AG04450 (cell line): ENCODE measurements at regions of chr22 and their contacts with region 1.

Region 1: GRCh38 chr22:24803011-24803542 is 2.9 kb upstream of the SGSM1 start:
- DNase-seq: no peak
- H3K4me3 ChIP-seq: no peak overlapping the region
- H3K27ac ChIP-seq: no peak overlapping the region
- H3K27me3 ChIP-seq: peaks cover 8% of the 10 kb centered on the region
- CTCF ChIP-seq: peak; percentile 88

Region 2: DNA sequence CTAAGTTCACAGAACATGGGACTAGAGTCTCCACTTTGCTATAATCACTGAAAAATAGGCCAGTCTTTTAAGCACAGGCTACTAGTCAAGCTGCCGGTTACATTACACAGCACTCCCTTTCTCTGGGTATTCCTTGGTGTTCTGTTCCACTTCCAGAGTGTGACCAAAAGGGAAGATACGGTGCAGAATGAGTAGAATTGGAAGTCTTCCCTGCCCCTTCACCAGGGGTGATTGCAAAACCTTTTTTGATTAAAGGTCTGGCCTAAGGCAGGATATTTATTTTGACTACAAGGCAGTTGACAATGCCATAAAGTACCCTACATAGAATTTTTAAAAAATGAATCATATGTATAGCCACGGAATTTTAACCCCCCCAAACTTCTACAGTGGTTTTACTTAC is 435.2 kb before region 1 on chr22:
- CTCF ChIA-PET with region 1: no interaction called
- POLR2A ChIA-PET with region 1: no interaction called
- DNase-seq: no peak
- H3K4me3 ChIP-seq: no peak overlapping the region
- H3K27ac ChIP-seq: no peak overlapping the region
- H3K27me3 ChIP-seq: no peaks in the 10 kb centered on the region
- CTCF ChIP-seq: no peak

Region 3: GRCh38 chr22:24791362-24791761 is 11.7 kb before region 1 on chr22:
- CTCF ChIA-PET with region 1: interaction called, 11 read pairs
- POLR2A ChIA-PET with region 1: no interaction called
- DNase-seq: no peak
- H3K4me3 ChIP-seq: no peak overlapping the region
- H3K27ac ChIP-seq: no peak overlapping the region
- H3K27me3 ChIP-seq: no peaks in the 10 kb centered on the region
- CTCF ChIP-seq: no peak

Region 4: GRCh38 chr22:24816806-24817205 is 13.7 kb after region 1 on chr22:
- CTCF ChIA-PET with region 1: interaction called, 23 read pairs
- POLR2A ChIA-PET with region 1: no interaction called
- DNase-seq: no peak
- H3K4me3 ChIP-seq: no peak overlapping the region
- H3K27ac ChIP-seq: no peak overlapping the region
- H3K27me3 ChIP-seq: peaks cover 2% of the 10 kb centered on the region
- CTCF ChIP-seq: no peak